Panc1 (cell line): ENCODE measurements at regions of chr9 and their contacts with region 1.

Region 1: DNA sequence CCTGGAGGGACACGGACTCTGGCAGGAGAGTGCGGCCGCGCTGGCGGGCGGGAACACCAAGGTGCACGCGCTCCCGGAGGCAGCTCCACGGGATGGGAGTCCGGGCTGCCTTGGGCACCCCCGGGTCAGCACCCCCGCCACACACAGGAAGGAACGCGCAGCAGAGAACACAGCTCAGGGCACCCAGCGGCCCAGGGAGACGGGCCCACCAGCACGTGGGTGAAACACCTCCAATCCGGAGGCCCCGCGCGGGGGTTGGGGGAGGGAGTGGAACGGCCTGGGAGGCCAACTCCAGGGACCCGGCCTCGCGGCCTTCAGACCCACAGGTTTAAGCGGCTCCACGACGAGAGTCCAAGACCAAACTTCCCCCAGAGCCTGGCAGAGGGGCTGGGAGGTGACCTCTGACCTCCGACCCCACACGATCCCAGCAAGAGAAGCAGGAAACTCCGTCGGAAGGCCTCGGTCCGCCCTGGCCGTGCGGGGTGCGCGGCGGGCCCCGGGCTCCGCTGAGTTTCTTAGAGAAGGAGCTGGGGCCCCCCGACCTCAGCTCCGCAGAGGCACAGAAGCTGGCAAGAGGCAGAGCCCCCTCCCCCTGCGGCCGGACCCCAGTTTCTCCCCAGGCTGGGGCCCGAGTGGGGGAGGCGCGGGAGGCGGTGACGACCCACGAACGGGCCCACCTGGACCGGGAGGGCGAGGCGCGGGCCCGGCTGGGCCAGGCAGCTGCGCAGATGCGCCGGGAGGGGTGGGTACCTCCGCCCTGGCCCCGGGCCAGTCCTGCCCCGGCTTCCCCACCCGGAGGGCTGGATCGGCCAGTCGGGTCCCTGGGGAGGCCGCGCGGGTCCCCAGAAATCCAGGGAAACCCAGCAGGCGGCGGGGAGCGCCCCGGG is 851 bp downstream of the NACC2 start:
- DNase-seq: no peak
- ATAC-seq: peak; percentile 58
- H3K4me3 ChIP-seq: peak overlapping the region; percentile 62 to 67
- H3K27ac ChIP-seq: peak overlapping the region; percentile 88
- H3K4me1 ChIP-seq: peaks cover 41% of the 10 kb centered on the region
- H3K27me3 ChIP-seq: no peaks in the 10 kb centered on the region
- CTCF ChIP-seq: no peak

Region 2: DNA sequence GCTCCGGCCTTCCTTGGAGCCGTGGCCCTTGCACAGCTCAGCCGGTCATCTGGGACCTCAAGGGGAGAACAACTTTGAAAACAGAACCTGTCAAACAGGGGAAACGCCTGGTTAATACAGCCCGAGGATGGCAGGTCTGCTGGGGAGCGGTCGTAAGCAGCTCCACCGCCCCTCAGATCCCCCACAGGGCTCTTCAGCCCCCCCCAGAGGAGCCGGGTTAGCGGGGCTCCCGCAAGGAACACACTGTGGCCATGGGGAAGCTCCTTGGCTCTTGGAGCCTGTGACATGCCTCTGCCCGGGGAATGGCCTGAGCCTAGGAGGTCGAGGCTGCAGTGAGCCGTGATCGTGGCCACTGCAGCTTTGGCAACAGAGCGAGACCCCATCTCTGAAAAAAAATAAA is 17.7 kb after region 1 on chr9:
- CTCF ChIA-PET with region 1: interaction called, 4 read pairs
- POLR2A ChIA-PET with region 1: interaction called, 19 read pairs
- in situ Hi-C with region 1: no loop called
- intact Hi-C with region 1: no loop called
- DNase-seq: no peak
- ATAC-seq: no peak
- H3K4me3 ChIP-seq: no peak overlapping the region
- H3K27ac ChIP-seq: no peak overlapping the region
- H3K4me1 ChIP-seq: peaks cover 17% of the 10 kb centered on the region
- H3K27me3 ChIP-seq: no peaks in the 10 kb centered on the region
- CTCF ChIP-seq: no peak